ENCODE measurements at regions of chr12 and their contacts with region 1.

Region 1: DNA sequence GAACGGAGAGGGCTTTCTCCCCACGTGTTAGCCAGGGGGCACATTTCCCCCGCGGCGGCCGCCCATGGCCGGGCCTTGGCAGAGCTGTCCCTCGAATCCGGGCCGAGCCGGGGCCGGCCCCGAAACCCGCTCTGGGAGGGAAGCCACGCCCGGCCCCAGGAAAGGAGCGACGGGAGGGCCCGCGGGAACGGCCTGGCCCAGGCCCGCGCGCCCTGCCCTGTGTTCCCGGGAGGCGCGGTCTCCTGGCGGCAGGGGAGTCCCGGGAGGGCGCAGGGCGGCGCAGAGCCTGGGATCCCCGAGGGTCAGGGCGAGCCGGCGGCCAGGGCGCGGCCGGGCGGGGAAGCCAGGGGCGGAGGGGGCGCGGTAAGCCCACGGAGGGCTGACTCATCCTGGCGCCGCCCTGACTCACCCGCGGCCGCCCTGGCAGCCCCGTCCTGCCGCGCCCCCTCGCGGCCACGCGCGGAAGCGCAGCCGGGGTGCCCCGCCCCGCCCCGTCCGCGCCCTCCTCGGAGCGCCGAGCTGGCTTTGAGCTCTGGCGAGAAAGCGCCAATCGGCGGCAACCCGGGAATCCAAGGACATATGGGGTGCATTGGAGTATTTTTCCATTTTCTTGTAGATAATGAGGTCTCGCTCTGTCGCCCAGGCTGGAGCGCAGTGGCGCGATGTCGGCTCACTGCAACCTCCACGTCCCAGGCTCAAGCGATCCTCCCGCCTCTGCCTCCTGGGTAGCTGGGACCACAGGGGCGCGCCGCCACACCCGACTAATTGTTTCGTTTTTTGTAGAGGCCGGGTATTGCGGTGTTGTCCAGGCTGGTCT is 31.8 kb upstream of the PLEKHG6 start:
- DNase-seq: no peak
- ATAC-seq: peak; percentile 95
- H3K4me3 ChIP-seq: peak overlapping the region; percentile 52; the same call in 1 of the 2 replicates
- H3K27ac ChIP-seq: peak overlapping the region; percentile 25; the same call in 1 of the 2 replicates
- H3K4me1 ChIP-seq: peaks cover 7% of the 10 kb centered on the region; the same call in 1 of the 2 replicates
- H3K27me3 ChIP-seq: no peaks in the 10 kb centered on the region
- CTCF ChIP-seq: peak; percentile 66 to 83 (median 78); a peak in 5 of 6 replicates
- EP300 ChIP-seq: no peak
- POLR2A ChIP-seq: no peak
- RAD21 ChIP-seq: peak; percentile 76

Region 2: DNA sequence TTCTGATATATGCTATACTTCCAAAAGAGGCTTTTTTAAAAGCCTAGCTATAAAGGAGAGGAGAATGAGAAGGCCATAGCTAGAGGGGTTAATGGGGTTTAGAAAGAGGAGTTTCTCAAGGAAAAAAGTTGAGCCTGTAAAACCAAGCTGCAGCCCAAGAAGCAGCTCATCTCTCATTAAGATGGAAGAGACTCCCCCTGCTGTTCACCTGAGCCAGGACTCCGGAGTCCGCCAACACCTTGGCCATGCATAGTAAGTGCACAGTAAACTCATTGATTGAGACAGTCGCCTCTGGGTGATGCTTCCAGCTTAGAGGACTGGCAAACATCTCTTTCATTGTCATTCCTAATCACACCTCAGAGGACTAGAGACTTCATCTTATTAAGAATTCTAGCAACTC is 379.8 kb before region 1 on chr12:
- CTCF ChIA-PET with region 1: no interaction called
- POLR2A ChIA-PET with region 1: no interaction called
- RAD21 ChIA-PET with region 1: no interaction called
- SMC1A ChIA-PET with region 1: no interaction called
- in situ Hi-C with region 1: no loop called
- intact Hi-C with region 1: no loop called
- DNase-seq: no peak
- ATAC-seq: no peak
- H3K4me3 ChIP-seq: no peak overlapping the region
- H3K27ac ChIP-seq: no peak overlapping the region
- H3K4me1 ChIP-seq: no peaks in the 10 kb centered on the region
- H3K27me3 ChIP-seq: peaks cover 0 to 3% of the 10 kb centered on the region in 2 experiments; a peak in 1 of 4 replicates
- CTCF ChIP-seq: no peak
- EP300 ChIP-seq: no peak
- POLR2A ChIP-seq: no peak
- RAD21 ChIP-seq: no peak

Region 3: GRCh38 chr12:5988659-5989116 is 290.0 kb before region 1 on chr12:
- CTCF ChIA-PET with region 1: interaction called, 63 read pairs
- POLR2A ChIA-PET with region 1: no interaction called
- RAD21 ChIA-PET with region 1: interaction called, 8 read pairs
- SMC1A ChIA-PET with region 1: interaction called, 23 read pairs
- in situ Hi-C with region 1: no loop called
- intact Hi-C with region 1: no loop called
- DNase-seq: peak; percentile 4
- ATAC-seq: peak; percentile 100
- H3K4me3 ChIP-seq: no peak overlapping the region
- H3K27ac ChIP-seq: no peak overlapping the region
- H3K4me1 ChIP-seq: no peaks in the 10 kb centered on the region
- H3K27me3 ChIP-seq: peaks cover 0 to under 1% of the 10 kb centered on the region in 2 experiments; a peak in 1 of 4 replicates
- CTCF ChIP-seq: peak; percentile 96
- EP300 ChIP-seq: no peak
- POLR2A ChIP-seq: no peak
- RAD21 ChIP-seq: peak; percentile 88

Region 4: GRCh38 chr12:6056406-6057240 is 222.0 kb before region 1 on chr12:
- CTCF ChIA-PET with region 1: interaction called, 18 read pairs
- POLR2A ChIA-PET with region 1: no interaction called
- RAD21 ChIA-PET with region 1: interaction called, 11 read pairs
- SMC1A ChIA-PET with region 1: interaction called, 3 read pairs
- in situ Hi-C with region 1: no loop called
- intact Hi-C with region 1: no loop called
- DNase-seq: no peak
- ATAC-seq: peak; percentile 36; the same call in 2 of the 3 replicates
- H3K4me3 ChIP-seq: no peak overlapping the region
- H3K27ac ChIP-seq: no peak overlapping the region
- H3K4me1 ChIP-seq: no peaks in the 10 kb centered on the region
- H3K27me3 ChIP-seq: peaks cover 0 to 2% of the 10 kb centered on the region in 2 experiments; a peak in 1 of 4 replicates
- CTCF ChIP-seq: peak in 2 of 3 experiments; percentile 4 to 7; a peak in 2 of 6 replicates
- EP300 ChIP-seq: no peak
- POLR2A ChIP-seq: no peak
- RAD21 ChIP-seq: no peak

Region 5: GRCh38 chr12:6062757-6063735 is 215.6 kb before region 1 on chr12:
- CTCF ChIA-PET with region 1: interaction called, 53 read pairs
- POLR2A ChIA-PET with region 1: no interaction called
- RAD21 ChIA-PET with region 1: interaction called, 38 read pairs
- SMC1A ChIA-PET with region 1: interaction called, 19 read pairs
- in situ Hi-C with region 1: no loop called
- intact Hi-C with region 1: no loop called
- DNase-seq: no peak
- ATAC-seq: peak; percentile 96
- H3K4me3 ChIP-seq: no peak overlapping the region
- H3K27ac ChIP-seq: no peak overlapping the region
- H3K4me1 ChIP-seq: no peaks in the 10 kb centered on the region
- H3K27me3 ChIP-seq: no peaks in the 10 kb centered on the region; a peak in 1 of 4 replicates
- CTCF ChIP-seq: peak; percentile 83 to 96 (median 94)
- EP300 ChIP-seq: no peak
- POLR2A ChIP-seq: no peak
- RAD21 ChIP-seq: peak; percentile 94

Region 6: DNA sequence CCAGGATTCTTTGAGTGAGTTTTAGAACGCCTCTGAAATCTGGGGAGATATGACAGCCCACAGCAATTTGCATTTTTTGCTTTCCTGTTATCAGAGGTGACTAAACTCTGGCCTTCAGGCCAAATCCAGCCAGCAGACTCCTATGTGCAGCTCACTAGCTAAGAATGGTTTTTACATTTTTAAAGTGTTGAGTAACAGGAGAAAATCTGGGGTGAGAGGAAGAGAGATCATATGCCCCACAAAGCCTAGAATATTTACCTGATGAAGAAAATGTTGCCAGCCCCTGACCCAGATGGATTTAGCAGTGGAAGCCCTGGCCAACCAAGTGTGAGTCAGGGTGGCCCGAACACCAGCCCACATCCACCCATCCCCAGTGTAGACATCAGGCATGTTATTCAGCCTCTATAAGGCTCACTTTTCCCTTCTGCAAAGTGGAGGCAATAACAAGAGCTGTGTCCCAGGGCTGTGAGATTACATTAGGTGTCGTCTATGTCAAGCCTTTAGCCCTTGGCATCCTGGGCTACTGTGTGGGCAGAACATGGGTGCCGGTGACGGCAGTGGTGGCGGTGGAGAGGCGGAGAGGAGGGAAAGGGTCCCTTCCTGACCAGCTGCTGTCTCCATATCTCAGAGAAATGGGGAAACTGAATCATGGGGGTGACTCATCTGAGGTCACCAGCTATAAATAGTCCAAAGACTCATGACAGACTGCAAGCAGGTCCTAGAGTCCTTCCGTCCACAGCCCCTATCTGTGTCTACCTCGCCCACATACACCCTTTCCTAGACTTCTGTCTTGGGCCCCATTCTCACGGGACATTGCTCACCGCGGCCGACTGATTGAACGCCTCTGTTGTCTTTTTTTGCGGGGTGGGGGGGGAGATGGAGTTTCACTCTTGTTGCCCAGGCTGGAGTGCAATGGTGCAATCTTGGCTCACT is 111.1 kb before region 1 on chr12:
- CTCF ChIA-PET with region 1: interaction called, 4 read pairs
- POLR2A ChIA-PET with region 1: interaction called, 4 read pairs
- RAD21 ChIA-PET with region 1: interaction called, 8 read pairs
- SMC1A ChIA-PET with region 1: interaction called, 12 read pairs
- in situ Hi-C with region 1: no loop called
- intact Hi-C with region 1: no loop called
- DNase-seq: peak; percentile 62
- ATAC-seq: peak; percentile 91
- H3K4me3 ChIP-seq: no peak overlapping the region
- H3K27ac ChIP-seq: peak overlapping the region; percentile 5
- H3K4me1 ChIP-seq: peaks cover 19% of the 10 kb centered on the region
- H3K27me3 ChIP-seq: no peaks in the 10 kb centered on the region
- CTCF ChIP-seq: no peak
- EP300 ChIP-seq: peak; percentile 23 to 53; a peak in 2 of 4 replicates
- POLR2A ChIP-seq: no peak
- RAD21 ChIP-seq: no peak

Region 7: GRCh38 chr12:6230321-6231110 is 48.1 kb before region 1 on chr12:
- CTCF ChIA-PET with region 1: interaction called, 15 read pairs
- POLR2A ChIA-PET with region 1: interaction called, 3 read pairs
- RAD21 ChIA-PET with region 1: interaction called, 23 read pairs
- SMC1A ChIA-PET with region 1: interaction called, 8 read pairs
- in situ Hi-C with region 1: no loop called
- intact Hi-C with region 1: no loop called
- DNase-seq: peak; percentile 69
- ATAC-seq: peak; percentile 98
- H3K4me3 ChIP-seq: no peak overlapping the region
- H3K27ac ChIP-seq: no peak overlapping the region
- H3K4me1 ChIP-seq: peaks cover 9% of the 10 kb centered on the region
- H3K27me3 ChIP-seq: no peaks in the 10 kb centered on the region; a peak in 1 of 4 replicates
- CTCF ChIP-seq: no peak
- EP300 ChIP-seq: peak; percentile 67 to 84; a peak in 3 of 4 replicates
- POLR2A ChIP-seq: peak; percentile 16; the same call in 1 of the 2 replicates
- RAD21 ChIP-seq: no peak

Region 8: DNA sequence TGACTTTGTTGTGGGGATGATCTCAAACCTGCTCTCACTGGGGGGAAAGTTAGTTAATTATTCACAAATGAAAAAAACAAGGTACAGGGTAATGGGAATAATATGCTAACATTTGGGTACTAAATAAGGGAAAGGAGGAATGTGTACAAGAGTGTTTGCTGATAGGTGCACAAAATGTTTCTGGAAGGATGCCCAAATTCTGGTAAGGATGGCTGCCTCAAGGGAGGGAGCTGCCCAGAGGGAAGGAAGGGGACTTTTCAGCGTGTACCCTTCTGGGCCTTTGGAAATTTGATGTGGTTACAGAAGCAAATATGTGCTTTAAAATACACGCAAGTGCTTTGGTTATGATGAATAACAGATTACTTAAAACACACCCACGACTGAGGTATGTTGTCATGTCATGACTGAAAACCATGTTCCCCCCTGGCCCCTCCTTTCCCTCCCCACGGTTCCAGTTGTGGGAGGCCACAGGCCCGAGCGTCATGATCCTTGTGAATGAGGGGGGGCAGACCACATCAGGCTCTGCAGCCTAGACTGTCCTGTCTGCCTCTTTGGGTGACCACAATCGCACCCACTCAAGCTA is 11.4 kb before region 1 on chr12:
- CTCF ChIA-PET with region 1: interaction called, 17 read pairs
- POLR2A ChIA-PET with region 1: interaction called, 10 read pairs
- RAD21 ChIA-PET with region 1: interaction called, 7 read pairs
- SMC1A ChIA-PET with region 1: interaction called, 8 read pairs
- in situ Hi-C with region 1: no loop called
- intact Hi-C with region 1: no loop called
- DNase-seq: no peak
- ATAC-seq: peak; percentile 77
- H3K4me3 ChIP-seq: no peak overlapping the region
- H3K27ac ChIP-seq: no peak overlapping the region
- H3K4me1 ChIP-seq: peaks cover 5% of the 10 kb centered on the region
- H3K27me3 ChIP-seq: no peaks in the 10 kb centered on the region
- CTCF ChIP-seq: no peak
- EP300 ChIP-seq: peak in 1 of 2 experiments; percentile 62; a peak in 2 of 4 replicates
- POLR2A ChIP-seq: no peak
- RAD21 ChIP-seq: no peak

Region 9: GRCh38 chr12:6347367-6348337 is 69.0 kb after region 1 on chr12:
- CTCF ChIA-PET with region 1: no interaction called
- POLR2A ChIA-PET with region 1: no interaction called
- RAD21 ChIA-PET with region 1: no interaction called
- SMC1A ChIA-PET with region 1: no interaction called
- in situ Hi-C with region 1: no loop called
- intact Hi-C with region 1: no loop called
- DNase-seq: no peak
- ATAC-seq: peak; percentile 37; the same call in 2 of the 3 replicates
- H3K4me3 ChIP-seq: no peak overlapping the region
- H3K27ac ChIP-seq: no peak overlapping the region
- H3K4me1 ChIP-seq: no peaks in the 10 kb centered on the region; the same call in 1 of the 2 replicates
- H3K27me3 ChIP-seq: peaks cover 3 to 7% of the 10 kb centered on the region in 2 experiments; a peak in 3 of 4 replicates
- CTCF ChIP-seq: no peak
- EP300 ChIP-seq: no peak
- POLR2A ChIP-seq: no peak
- RAD21 ChIP-seq: no peak